Right ventricle myocardium inferior (tissue), 1 donor: ENCODE measurements at regions of chr7 and their contacts with region 1.

Region 1: DNA sequence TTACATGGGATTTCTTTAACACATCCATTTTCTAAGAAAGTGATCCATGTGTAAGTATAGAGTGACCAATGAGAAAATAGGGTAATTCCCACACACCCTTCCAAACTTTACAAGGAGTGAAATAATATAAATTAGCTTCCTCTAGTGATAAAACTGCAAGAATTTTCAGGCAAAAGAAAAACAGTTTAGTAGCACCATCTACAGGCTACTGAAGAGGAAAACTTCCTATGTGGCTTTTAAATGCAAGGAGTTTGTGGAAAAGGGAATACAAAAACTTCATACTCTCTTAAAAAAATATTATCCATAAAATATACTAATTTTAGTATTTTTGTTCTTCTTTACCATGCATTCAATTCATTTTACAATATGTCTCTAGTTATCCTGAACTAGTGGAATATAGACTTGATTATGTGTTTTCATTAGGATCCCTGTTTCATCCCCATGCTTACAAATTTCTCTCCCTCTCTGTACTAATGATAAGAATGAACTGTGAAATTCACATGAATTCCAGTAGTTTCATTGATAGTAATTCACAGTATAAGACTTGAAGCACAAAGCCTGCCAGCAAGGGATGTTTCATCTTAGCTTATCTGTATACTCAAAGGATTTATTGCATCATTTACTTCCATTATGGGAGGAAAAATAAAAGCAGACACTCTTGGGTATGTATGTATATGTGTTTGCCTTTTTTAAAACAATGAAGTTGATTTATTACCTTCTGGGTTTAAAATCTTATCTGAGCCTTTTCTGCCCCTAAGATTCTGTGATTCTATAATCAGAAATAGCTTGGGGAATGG is 442.9 kb downstream of the AUTS2 start:
- DNase-seq: no peak
- ATAC-seq: no peak

Region 2: DNA sequence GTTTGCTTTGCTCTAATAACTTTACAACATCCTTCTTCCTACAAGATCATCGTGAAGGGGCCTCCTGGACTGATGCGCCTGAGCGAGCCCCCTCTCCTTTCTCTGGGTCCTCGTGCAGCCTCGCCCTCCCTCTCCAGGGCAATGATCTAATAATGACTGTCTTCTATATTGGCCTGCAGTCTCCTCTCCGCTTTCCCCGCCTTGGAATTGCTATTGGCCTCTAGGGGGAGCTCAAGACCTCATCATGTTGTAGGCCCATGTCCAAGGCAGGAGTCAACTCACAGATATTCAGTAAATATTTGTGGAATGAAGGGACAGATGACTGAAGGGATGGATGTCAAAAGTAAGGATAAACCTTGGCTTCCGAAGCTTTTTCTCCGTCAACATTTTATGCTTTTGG is 1864.2 kb before region 1 on chr7:
- intact Hi-C with region 1: loop called (anchors 10 kb)
- DNase-seq: no peak
- ATAC-seq: peak; percentile 56

Region 3: DNA sequence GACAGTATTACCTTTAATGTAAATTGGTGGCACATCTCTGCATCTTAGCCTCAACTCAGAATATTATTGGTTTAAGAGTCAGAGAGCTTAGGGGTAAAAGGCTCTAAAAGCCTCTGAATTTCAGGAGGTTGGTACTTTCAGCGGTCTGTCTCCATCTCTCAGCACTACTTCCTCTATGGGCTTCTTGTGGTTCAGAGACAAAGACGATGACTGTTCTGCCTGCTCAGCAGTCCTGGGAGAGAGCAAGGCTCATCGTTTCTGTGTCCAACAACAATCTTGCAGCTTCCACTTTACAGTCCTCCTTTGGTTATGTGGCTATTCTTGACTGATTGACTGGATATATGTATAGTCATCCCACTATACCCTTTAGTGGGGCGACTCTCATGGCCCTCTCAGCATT is 48.2 kb before region 1 on chr7:
- intact Hi-C with region 1: no loop called
- DNase-seq: no peak
- ATAC-seq: no peak

Region 4: GRCh38 chr7:70072220-70072619 is 31.1 kb after region 1 on chr7:
- intact Hi-C with region 1: no loop called
- DNase-seq: no peak
- ATAC-seq: peak; percentile 79

Region 5: DNA sequence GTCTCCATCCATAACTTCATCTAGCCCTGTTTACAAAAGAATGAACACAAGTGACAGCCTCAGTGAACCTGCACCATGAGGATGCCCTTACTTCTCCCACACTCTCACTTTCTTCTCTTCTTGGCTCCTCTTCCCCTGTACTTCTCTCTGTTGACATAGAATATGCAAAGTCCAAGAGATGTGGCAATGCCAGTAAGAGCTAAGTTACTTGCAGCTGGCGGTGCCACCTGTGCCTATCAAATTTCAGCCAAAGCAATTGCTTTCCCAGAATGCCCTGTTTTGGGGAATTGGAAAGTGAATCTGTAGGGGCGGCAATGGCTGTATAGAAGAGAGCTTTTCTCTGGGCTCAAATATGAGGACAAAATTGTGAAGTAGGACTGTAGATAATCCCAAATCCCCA is 114.9 kb after region 1 on chr7:
- intact Hi-C with region 1: loop called (anchors 5 kb)
- DNase-seq: no peak
- ATAC-seq: no peak